Left ventricle myocardium inferior (tissue), 1 donor: ENCODE measurements at regions of chr18 and their contacts with region 1.

Region 1: GRCh38 chr18:41121116-41121826 is 833.8 kb upstream of the PIK3C3 start:
- DNase-seq: no peak
- H3K4me3 ChIP-seq: no peak overlapping the region
- H3K27ac ChIP-seq: no peak overlapping the region
- H3K4me1 ChIP-seq: no peaks in the 10 kb centered on the region
- H3K27me3 ChIP-seq: no peaks in the 10 kb centered on the region
- CTCF ChIP-seq: no peak

Region 2: DNA sequence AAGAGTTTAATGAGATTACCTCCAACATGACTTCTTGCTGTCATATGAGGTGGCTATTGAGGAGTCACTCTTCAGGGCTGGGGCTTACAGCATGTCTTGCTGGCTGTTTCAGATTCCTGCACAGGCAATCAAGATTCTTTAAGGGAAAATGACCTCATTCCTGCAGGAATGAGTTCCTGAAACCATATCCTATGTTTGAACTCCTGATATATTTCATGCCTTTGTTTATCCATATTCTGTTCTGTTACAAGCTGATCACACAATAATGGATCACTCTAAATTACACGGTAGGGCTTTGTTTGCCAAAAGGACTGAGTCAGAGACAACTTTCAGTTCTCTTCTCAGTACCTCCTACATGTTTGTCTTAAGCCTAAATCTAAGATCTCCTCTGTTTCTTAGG is 46.1 kb before region 1 on chr18:
- intact Hi-C with region 1: loop called (anchors 10 kb)
- DNase-seq: no peak
- H3K4me3 ChIP-seq: no peak overlapping the region
- H3K27ac ChIP-seq: no peak overlapping the region
- H3K4me1 ChIP-seq: no peaks in the 10 kb centered on the region
- H3K27me3 ChIP-seq: no peaks in the 10 kb centered on the region
- CTCF ChIP-seq: no peak